Caco-2 (cell line): ENCODE measurements at regions of chr16 and their contacts with region 1.

Region 1: DNA sequence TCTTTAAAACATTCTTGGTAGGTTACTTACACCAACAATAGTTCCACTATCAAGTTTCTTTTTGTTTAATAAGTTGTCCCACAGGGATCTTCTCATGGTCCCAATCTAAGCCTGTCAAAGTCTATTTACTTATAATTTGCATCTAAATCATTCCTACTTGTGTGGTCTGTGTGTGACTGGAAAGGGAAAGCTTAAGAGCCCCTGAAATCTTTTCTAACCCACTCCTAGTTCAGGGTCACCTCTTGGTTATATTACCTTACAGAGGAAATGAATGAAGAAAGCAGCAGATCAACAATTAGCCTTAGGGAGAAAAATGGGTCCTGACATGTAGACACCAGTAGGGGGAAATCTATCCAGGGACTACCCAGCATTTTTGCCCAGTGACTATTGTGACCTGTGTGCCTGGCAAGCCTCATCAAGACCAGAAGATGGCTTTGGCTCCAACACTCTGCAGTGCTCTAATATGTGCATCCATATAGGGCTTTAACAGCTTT is 110.4 kb upstream of the HAS3 start:
- DNase-seq: peak; percentile 63
- H3K4me3 ChIP-seq: no peak overlapping the region
- H3K4me3 Mint-ChIP-seq: no peak overlapping the region
- H3K27ac Mint-ChIP-seq: peak overlapping the region; percentile 57
- H3K4me1 ChIP-seq: peaks cover 88% of the 10 kb centered on the region
- H3K4me1 Mint-ChIP-seq: peaks cover 48% of the 10 kb centered on the region
- H3K27me3 ChIP-seq: no peaks in the 10 kb centered on the region
- H3K27me3 Mint-ChIP-seq: no peaks in the 10 kb centered on the region
- CTCF ChIP-seq: peak; percentile 50 to 70

Region 2: DNA sequence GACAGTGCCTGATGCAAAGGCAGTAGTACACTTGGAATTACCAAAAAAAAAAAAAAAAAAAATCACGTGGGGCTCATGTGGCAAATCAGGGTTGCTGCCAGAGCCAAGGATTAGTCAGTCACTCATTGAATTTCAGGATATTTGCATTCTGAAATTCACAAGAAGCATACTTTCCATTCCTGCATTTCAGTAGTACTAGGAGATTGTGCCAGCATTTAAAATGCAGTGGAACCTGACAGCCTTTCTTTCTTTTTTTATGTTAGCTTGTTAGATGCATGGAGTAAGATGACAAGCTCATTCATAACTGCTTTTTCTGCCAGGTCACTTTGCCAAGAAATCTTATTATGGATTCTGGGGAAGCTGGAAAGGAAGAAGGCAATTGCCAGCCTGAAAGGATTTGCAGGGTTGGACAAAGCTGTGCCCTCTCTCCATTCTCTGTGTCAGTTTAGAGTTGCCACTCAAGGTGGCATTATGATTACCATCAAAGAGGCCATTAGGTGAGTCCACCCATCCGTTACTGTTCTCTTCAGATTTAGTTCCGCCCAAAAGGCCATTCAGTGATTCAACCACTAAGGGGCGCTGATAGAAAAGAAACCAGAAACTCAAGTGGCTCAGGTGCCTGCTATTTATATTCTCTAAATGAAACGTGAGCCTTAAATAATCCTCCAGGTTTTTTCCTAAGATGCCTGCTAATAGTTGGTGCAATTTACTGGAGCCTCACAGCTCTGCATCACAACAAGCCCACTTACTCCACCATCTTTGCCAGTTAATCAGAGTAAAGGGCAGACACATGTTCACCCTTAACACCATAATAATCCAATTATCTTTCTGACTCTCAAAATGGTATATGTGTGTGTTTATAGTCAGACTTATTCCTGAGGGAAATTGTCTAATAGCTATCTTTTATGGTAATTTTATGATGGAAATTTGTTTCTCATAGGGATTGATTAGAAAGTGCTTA is 92.8 kb before region 1 on chr16:
- CTCF ChIA-PET with region 1: no interaction called
- POLR2A ChIA-PET with region 1: no interaction called
- intact Hi-C with region 1: loop called (anchors 1 kb)
- DNase-seq: peak; percentile 57 to 79
- H3K4me3 ChIP-seq: no peak overlapping the region
- H3K4me3 Mint-ChIP-seq: no peak overlapping the region
- H3K27ac Mint-ChIP-seq: peak overlapping the region; percentile 29
- H3K4me1 ChIP-seq: peaks cover 12% of the 10 kb centered on the region
- H3K4me1 Mint-ChIP-seq: peaks cover 14% of the 10 kb centered on the region
- H3K27me3 ChIP-seq: no peaks in the 10 kb centered on the region
- H3K27me3 Mint-ChIP-seq: no peaks in the 10 kb centered on the region
- CTCF ChIP-seq: peak; percentile 73 to 87

Region 3: GRCh38 chr16:68907781-68908181 is 87.3 kb before region 1 on chr16:
- CTCF ChIA-PET with region 1: no interaction called
- POLR2A ChIA-PET with region 1: no interaction called
- intact Hi-C with region 1: loop called (anchors 1 kb)
- DNase-seq: peak in 1 of 2 experiments; percentile 72
- H3K4me3 ChIP-seq: no peak overlapping the region
- H3K4me3 Mint-ChIP-seq: peak overlapping the region; percentile 57
- H3K27ac Mint-ChIP-seq: peak overlapping the region; percentile 96
- H3K4me1 ChIP-seq: peaks cover 35% of the 10 kb centered on the region
- H3K4me1 Mint-ChIP-seq: peaks cover 25% of the 10 kb centered on the region
- H3K27me3 ChIP-seq: no peaks in the 10 kb centered on the region
- H3K27me3 Mint-ChIP-seq: no peaks in the 10 kb centered on the region
- CTCF ChIP-seq: no peak

Region 4: GRCh38 chr16:69031877-69032301 is 36.8 kb after region 1 on chr16:
- CTCF ChIA-PET with region 1: no interaction called
- POLR2A ChIA-PET with region 1: no interaction called
- intact Hi-C with region 1: loop called (anchors 5 kb)
- DNase-seq: peak; percentile 86 to 93
- H3K4me3 ChIP-seq: no peak overlapping the region
- H3K4me3 Mint-ChIP-seq: peak overlapping the region; percentile 25
- H3K27ac Mint-ChIP-seq: peak overlapping the region; percentile 80
- H3K4me1 ChIP-seq: peaks cover 15% of the 10 kb centered on the region
- H3K4me1 Mint-ChIP-seq: peaks cover 8% of the 10 kb centered on the region
- H3K27me3 ChIP-seq: no peaks in the 10 kb centered on the region
- H3K27me3 Mint-ChIP-seq: no peaks in the 10 kb centered on the region
- CTCF ChIP-seq: no peak

Region 5: GRCh38 chr16:69040138-69040909 is 45.3 kb after region 1 on chr16:
- CTCF ChIA-PET with region 1: no interaction called
- POLR2A ChIA-PET with region 1: no interaction called
- intact Hi-C with region 1: loop called (anchors 2 kb)
- DNase-seq: peak in 1 of 2 experiments; percentile 28
- H3K4me3 ChIP-seq: no peak overlapping the region
- H3K4me3 Mint-ChIP-seq: no peak overlapping the region
- H3K27ac Mint-ChIP-seq: no peak overlapping the region
- H3K4me1 ChIP-seq: peaks cover 14% of the 10 kb centered on the region
- H3K4me1 Mint-ChIP-seq: peaks cover 10% of the 10 kb centered on the region
- H3K27me3 ChIP-seq: no peaks in the 10 kb centered on the region
- H3K27me3 Mint-ChIP-seq: no peaks in the 10 kb centered on the region
- CTCF ChIP-seq: no peak

Region 6: DNA sequence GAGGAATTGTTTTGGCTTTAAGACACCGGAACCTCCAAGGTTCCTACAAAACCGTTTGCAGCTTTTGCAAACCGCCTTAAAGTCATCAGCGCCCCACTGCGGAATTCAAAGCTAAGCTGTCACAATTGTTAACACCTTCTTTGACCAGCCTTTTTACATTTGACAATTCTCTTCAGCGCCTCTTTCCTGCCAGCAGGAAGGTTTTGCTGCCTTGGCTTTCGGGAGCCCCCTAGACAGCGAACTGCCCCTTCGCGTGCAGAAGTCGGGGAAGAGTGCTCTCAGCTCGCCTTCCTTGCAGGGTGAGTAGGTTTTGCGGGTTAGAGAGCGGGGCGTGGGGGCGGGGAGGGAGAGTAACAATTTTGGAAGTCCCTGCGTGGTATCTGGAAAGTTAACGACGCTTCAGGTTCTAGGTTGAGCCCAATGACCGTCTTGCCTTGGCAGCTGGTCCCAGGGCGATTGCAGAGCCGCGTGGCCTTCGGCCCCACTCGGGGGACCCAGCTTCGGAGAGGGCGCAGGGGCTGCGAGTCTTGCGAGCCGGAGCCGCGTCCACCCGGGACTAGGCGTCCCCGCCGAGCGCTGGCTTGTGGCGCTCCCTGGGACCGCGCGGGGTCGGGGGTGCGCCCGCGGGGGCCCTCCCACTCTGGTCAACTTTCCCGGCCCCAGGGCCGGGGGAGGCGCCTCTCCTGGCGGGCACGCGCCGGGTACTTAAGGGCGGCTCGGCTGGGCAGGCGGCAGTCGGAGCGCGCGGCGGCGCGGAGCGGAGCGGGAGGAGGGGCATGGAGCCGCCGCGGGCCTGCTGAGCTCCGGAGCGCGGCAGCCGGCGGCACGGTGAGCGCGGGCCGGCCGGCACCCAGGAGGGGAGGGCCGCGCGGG is 110.7 kb after region 1 on chr16 and contains the start of gene HAS3:
- CTCF ChIA-PET with region 1: interaction called, 8 read pairs
- POLR2A ChIA-PET with region 1: no interaction called
- intact Hi-C with region 1: loop called (anchors 1 kb)
- DNase-seq: peak; percentile 73 to 89
- H3K4me3 ChIP-seq: peak within 1 kb of the TSS; percentile 50
- H3K4me3 Mint-ChIP-seq: peak within 1 kb of the TSS; percentile 92
- H3K27ac Mint-ChIP-seq: peak within 1 kb of the TSS; percentile 61
- H3K4me1 ChIP-seq: peaks cover 9% of the 10 kb centered on the region
- H3K4me1 Mint-ChIP-seq: peaks cover 20% of the 10 kb centered on the region
- H3K27me3 ChIP-seq: no peaks in the 10 kb centered on the region
- H3K27me3 Mint-ChIP-seq: no peaks in the 10 kb centered on the region
- CTCF ChIP-seq: peak; percentile 33 to 60
- total RNA-seq, gene HAS3: 8.3 TPM in 2 replicates

Region 7: DNA sequence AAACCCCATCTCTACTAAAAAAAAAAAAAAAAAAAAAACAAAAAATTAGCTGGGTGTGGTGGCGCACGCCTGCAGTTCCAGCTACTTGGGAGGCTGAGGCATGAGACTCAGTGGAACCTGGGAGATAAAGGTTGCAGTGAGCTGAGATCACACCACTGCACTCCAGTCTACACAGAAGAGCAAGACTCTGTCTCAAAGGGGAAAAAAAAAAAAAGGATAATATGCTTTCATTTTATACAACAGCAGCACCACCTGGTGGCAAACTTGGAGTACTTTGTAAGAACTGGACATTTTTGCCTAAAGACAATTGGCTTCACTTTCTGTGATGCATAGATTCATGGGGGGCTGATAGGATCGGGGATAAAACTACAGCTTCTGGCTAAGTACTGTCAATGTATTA is 128.9 kb after region 1 on chr16:
- CTCF ChIA-PET with region 1: interaction called, 4 read pairs
- POLR2A ChIA-PET with region 1: no interaction called
- intact Hi-C with region 1: loop called (anchors 1 kb)
- DNase-seq: peak; percentile 69 to 79
- H3K4me3 ChIP-seq: no peak overlapping the region
- H3K4me3 Mint-ChIP-seq: no peak overlapping the region
- H3K27ac Mint-ChIP-seq: no peak overlapping the region
- H3K4me1 ChIP-seq: no peaks in the 10 kb centered on the region
- H3K4me1 Mint-ChIP-seq: no peaks in the 10 kb centered on the region
- H3K27me3 ChIP-seq: no peaks in the 10 kb centered on the region
- H3K27me3 Mint-ChIP-seq: no peaks in the 10 kb centered on the region
- CTCF ChIP-seq: peak; percentile 67 to 83